BJ (cell line): ENCODE measurements at regions of chr2 and their contacts with region 1.

Region 1: GRCh38 chr2:110827511-110827910 is 95.1 kb downstream of the ACOXL start:
- DNase-seq: no peak
- H3K4me3 ChIP-seq: no peak overlapping the region
- H3K27me3 ChIP-seq: peaks cover 3% of the 10 kb centered on the region; the same call in 1 of the 2 replicates
- CTCF ChIP-seq: no peak

Region 2: GRCh38 chr2:110662560-110662959 is 165.0 kb before region 1 on chr2:
- CTCF ChIA-PET with region 1: no interaction called
- POLR2A ChIA-PET with region 1: no interaction called
- DNase-seq: no peak
- H3K4me3 ChIP-seq: no peak overlapping the region
- H3K27me3 ChIP-seq: no peaks in the 10 kb centered on the region
- CTCF ChIP-seq: no peak

Region 3: DNA sequence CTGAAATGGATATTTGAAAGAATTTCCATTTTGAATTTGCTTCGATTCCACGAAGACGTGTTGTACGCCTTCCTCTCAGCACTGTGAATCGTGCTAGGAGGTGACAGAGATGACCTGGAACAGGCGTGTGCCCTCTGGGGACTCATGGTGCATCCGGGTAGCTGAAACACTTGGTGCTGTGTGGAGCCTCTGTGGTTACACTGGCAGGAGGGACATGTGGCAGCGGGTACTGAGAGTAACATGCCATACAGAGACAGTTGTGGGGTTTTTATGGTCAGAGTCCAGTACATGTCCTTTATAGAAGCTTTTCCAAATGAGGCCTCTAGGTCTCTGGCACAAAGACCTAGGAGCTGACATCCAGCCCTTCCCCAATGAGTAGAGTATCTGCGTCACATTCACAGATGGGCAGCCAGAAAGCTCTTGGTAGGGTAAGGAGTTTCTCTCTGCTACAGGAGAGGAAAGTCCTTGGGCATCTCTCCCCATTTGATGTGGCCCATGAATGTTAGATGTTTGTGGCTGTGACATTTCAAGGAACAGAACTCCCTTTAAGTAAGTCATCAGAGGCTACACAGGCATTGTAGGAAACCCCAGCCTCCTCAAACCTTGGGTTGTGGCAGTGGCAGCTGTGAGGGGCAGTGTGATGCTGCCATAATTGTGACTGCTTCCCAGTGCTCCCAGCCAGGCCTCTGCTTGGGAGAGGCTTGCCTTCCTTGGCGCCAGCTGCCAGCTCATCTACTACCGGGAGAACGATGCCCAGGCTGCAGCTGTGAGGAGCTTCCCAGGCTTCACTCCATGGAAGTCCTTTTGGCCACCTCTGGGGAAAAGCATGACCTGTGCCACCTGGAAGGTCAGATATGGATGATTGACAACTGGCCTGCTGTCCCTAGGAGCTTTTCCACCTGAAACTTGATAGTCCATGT is 14.5 kb before region 1 on chr2:
- CTCF ChIA-PET with region 1: interaction called, 14 read pairs
- POLR2A ChIA-PET with region 1: no interaction called
- DNase-seq: no peak
- H3K4me3 ChIP-seq: no peak overlapping the region
- H3K27me3 ChIP-seq: peaks cover 12% of the 10 kb centered on the region
- CTCF ChIP-seq: no peak

Region 4: GRCh38 chr2:110853507-110853906 is 26.0 kb after region 1 on chr2:
- CTCF ChIA-PET with region 1: no interaction called
- POLR2A ChIA-PET with region 1: no interaction called
- DNase-seq: no peak
- H3K4me3 ChIP-seq: no peak overlapping the region
- H3K27me3 ChIP-seq: peaks cover 9% of the 10 kb centered on the region
- CTCF ChIP-seq: peak; percentile 53

Region 5: GRCh38 chr2:110883406-110883805 is 55.9 kb after region 1 on chr2:
- CTCF ChIA-PET with region 1: no interaction called
- POLR2A ChIA-PET with region 1: no interaction called
- DNase-seq: no peak
- H3K4me3 ChIP-seq: no peak overlapping the region
- H3K27me3 ChIP-seq: peaks cover 2% of the 10 kb centered on the region; the same call in 1 of the 2 replicates
- CTCF ChIP-seq: no peak